Right ventricle myocardium inferior (tissue), 1 donor: ENCODE measurements at regions of chr16 and their contacts with region 1.

Region 1: DNA sequence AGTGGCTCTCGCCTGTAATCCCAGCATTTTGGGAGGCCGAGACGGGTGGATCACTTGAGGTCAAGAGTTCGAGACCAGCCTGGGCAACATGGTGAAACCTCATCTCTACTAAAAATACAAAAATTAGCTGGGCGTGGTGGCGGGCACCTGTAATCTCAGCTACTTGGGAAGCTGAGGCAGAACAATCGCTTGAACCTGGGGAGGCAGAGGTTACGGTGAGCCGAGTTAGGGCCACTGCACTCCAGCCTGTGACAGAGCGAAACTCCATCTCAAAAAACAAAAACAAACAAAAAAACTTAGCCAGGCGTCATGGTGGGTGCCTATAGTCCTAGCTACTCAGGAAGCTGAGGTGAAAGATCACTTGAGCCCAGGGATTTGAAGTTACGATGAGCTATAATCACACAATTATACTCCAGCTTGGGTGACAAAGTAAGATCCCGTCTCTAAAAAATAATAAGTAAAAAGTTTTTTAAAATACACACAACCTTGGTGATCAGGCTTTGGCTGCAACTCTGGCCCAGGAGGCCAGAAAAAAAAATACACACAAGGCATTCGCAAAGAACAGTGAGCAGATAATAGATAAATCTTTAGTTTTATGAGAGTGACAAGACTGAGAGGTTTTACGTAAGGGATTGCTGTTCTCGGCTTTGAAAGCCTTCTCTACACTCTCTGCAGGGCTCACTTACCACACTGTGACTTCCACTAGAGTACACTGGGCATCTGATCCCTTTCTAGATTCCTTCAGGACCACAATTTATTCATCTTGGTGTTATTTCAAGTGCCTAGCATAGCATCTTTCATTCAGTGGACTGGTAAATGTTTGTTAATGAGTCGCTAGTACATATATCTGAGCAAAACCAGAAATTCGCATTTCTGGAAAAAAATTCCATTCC is 5.9 kb downstream of the GSPT1 start:
- DNase-seq: no peak
- ATAC-seq: no peak

Region 2: DNA sequence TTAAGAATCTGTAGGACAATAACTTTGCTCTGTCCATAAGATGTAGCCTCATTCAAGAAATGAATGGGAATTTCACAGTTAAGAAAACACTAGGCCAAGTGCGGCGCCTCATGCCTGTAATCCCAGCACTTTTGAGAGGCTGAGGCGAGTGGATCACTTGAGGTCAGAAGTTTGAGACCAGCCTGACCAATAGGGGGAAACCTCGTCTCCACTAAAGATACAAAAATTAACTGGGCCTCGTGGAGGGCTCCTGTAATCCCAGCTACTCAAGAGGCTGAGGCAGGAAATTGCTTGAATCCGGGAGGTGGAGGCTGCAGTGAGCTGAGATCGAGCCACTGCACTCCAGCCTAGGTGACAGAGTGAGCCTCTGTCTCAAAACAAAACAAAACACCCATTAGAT is 38.7 kb before region 1 on chr16:
- intact Hi-C with region 1: loop called (anchors 5 kb)
- DNase-seq: no peak
- ATAC-seq: peak; percentile 46